WTC11 (cell line): ENCODE measurements at regions of chr10 and their contacts with region 1.

Region 1: GRCh38 chr10:101840741-101841453 is 2.7 kb downstream of the KCNIP2 start:
- DNase-seq: peak; percentile 94
- ATAC-seq: peak; percentile 54
- H3K4me3 Mint-ChIP-seq: peak overlapping the region; percentile 91
- H3K27ac Mint-ChIP-seq: peak overlapping the region; percentile 79; the same call in 1 of the 2 replicates
- H3K4me1 Mint-ChIP-seq: peaks cover 38% of the 10 kb centered on the region
- H3K27me3 Mint-ChIP-seq: peaks cover 25% of the 10 kb centered on the region
- CTCF ChIP-seq: peak; percentile 93

Region 2: DNA sequence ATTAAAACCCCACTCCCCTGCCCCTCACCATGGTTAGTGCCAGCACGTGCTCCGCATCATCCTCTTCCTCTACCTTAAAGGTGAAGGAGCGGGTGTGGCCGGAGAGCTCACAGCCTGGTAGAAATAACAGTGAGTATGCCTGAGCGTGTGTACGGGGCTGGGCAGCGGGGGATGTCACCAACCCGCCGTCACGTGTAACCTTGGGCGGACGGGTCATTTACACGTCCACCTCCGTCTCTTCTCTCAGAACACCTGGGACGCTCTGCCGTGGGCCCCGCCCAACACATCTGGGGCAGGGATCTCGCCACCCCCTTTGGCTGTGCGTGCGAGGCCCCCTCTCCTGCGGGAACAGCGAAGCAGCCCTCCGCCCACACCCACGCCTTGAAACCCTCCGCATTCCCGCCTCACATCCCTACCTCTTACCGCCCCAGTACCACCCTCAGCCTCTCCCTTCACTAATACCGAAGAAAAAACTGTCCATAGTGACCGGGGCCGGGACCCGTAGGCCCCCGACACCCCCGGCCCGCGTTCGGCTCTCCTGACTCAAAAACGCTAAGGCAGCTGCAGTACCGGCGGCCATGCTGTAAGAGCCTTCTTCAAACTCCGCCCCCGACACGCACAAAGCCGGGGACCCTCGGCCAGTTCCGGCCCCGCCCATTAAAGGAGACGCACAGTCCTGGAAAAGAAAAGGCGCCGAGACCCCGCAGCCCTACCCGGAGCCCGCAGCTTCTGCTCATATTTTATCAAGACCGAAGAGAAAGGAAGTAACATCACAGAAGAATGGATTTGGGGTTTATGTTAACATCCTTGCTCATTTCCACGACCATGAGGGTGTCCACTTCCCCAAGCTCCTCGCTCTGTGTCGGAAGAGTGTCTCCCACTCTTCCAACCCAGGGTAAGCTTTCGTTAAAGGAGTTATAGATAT is 57.8 kb before region 1 on chr10 and contains the start of gene NPM3:
- CTCF ChIA-PET with region 1: interaction called, 56 read pairs
- POLR2A ChIA-PET with region 1: no interaction called
- DNase-seq: peak; percentile 93
- ATAC-seq: peak; percentile 40
- H3K4me3 Mint-ChIP-seq: peak within 1 kb of the TSS; percentile 100
- H3K27ac Mint-ChIP-seq: peak within 1 kb of the TSS; percentile 92
- H3K4me1 Mint-ChIP-seq: peaks cover 47% of the 10 kb centered on the region
- H3K27me3 Mint-ChIP-seq: peaks cover 11% of the 10 kb centered on the region
- CTCF ChIP-seq: no peak
- total RNA-seq, gene NPM3: 223 to 260 TPM (median 229 TPM) in 3 replicates

Region 3: DNA sequence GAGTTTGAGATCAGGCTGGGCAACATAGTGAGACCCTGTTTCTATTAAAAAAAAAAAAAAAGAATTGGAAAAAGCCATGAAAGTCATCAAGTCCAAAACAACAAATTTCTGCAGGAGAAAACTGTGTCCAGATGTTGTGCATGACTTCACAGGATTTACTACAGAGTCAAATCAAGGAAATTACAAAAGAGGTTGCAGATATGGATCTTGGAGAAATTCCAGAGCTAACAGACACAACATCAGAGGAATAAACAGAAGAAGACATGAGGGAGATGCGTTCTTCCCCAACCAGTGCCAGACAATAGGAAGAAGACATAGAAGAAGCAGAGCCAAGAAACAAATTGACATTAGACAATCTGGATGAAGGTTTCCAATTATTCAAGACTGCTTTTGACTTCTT is 27.0 kb after region 1 on chr10:
- CTCF ChIA-PET with region 1: interaction called, 14 read pairs
- POLR2A ChIA-PET with region 1: no interaction called
- DNase-seq: no peak
- ATAC-seq: no peak
- H3K4me3 Mint-ChIP-seq: no peak overlapping the region
- H3K27ac Mint-ChIP-seq: no peak overlapping the region
- H3K4me1 Mint-ChIP-seq: no peaks in the 10 kb centered on the region
- H3K27me3 Mint-ChIP-seq: no peaks in the 10 kb centered on the region
- CTCF ChIP-seq: no peak

Region 4: DNA sequence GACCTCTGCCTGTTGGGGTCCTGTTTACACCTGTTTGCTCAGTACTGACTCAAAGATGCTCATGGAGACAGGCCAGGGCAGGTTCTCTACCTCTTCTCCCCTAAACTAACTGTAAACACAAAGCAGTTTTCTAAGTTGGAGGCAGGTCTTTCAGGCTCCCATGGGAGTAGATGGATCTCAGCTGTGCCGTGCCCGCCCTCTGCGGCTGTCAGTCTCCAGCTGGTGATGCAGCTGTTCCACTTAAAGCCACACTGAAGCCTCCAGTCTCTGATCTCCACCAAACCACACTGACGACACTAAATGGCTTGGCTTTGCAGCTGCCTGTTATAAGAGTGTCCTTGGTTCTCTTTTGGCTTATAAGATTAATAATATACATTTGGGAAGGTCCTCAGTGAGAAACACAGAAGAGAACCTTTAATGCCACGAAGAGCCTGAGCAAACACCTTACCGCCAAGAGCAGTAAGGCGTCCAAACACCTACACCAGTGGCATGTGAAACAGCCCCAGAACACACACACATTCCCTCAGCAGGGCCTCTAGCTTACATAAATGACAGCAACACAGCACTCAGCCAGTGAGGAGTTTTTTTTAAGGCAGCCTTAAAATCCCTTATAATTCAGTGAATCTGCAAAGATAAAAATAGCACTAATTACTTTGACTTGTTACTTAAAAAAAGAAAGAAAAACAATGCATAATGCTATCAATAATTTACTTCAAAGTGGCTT is 63.1 kb after region 1 on chr10:
- CTCF ChIA-PET with region 1: interaction called, 26 read pairs
- POLR2A ChIA-PET with region 1: interaction called, 4 read pairs
- DNase-seq: no peak
- ATAC-seq: no peak
- H3K4me3 Mint-ChIP-seq: no peak overlapping the region
- H3K27ac Mint-ChIP-seq: peak overlapping the region; percentile 35; the same call in 1 of the 2 replicates
- H3K4me1 Mint-ChIP-seq: peaks cover 44% of the 10 kb centered on the region
- H3K27me3 Mint-ChIP-seq: no peaks in the 10 kb centered on the region
- CTCF ChIP-seq: no peak

Region 5: DNA sequence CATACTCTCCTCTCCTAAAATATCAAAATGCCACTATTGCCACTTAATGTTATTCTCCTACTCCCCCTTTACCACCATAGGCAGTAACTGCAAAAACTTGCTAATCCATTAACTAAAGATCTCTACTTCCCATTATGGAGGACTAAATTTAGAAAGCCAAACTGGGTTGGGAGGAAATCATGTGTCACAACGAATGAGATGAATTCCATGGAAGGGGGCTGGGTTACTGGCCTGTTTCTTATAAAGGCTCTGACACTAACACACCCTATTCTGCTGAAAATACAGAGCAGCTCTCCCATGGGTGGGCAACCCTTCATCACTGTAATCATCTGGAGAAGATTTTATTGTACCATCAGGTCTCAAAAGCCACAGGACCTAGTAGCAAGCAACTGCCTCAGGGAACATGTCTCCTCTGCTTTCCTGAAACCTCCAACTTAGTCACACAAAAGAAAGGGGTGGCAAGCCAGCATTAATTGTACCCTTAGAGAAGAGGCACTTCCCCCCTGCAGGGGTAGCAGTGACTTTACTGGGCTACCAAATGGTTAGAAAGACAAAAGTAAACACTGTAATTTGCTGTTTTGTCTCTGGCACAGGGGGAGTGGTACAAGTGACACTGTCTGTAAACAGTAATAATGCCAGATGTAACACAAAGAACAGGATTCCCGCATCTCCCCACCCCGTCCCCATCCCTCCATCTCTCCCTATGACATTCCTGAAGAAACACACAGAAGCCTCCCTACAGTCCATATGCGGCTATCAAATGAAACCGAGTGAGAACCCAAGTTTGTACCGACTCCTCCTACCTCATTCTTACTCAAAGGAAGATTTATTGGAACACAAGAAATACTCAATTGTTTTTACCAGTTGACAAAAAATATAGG is 133.4 kb after region 1 on chr10:
- CTCF ChIA-PET with region 1: interaction called, 16 read pairs
- POLR2A ChIA-PET with region 1: no interaction called
- DNase-seq: no peak
- ATAC-seq: peak; percentile 38
- H3K4me3 Mint-ChIP-seq: no peak overlapping the region
- H3K27ac Mint-ChIP-seq: peak overlapping the region; percentile 5; the same call in 1 of the 2 replicates
- H3K4me1 Mint-ChIP-seq: peaks cover 17% of the 10 kb centered on the region
- H3K27me3 Mint-ChIP-seq: no peaks in the 10 kb centered on the region
- CTCF ChIP-seq: no peak

Region 6: GRCh38 chr10:102055647-102056419 is 214.9 kb after region 1 on chr10 and contains the start of gene ARMH3:
- CTCF ChIA-PET with region 1: interaction called, 34 read pairs
- POLR2A ChIA-PET with region 1: no interaction called
- DNase-seq: peak; percentile 93
- ATAC-seq: peak; percentile 94
- H3K4me3 Mint-ChIP-seq: peak within 1 kb of the TSS; percentile 95
- H3K27ac Mint-ChIP-seq: peak within 1 kb of the TSS; percentile 95
- H3K4me1 Mint-ChIP-seq: peaks cover 19% of the 10 kb centered on the region
- H3K27me3 Mint-ChIP-seq: no peaks in the 10 kb centered on the region; the same call in none of the 2 replicates
- CTCF ChIP-seq: no peak
- total RNA-seq, gene ARMH3: 16.0 to 17.9 TPM (median 17.1 TPM) in 3 replicates